ENCODE measurements at regions of chr6 and their contacts with region 1.

Region 1: GRCh38 chr6:42984001-42984923 is at the start of gene PPP2R5D:
- DNase-seq: peak; percentile 81 to 98 (median 97)
- ATAC-seq: peak; percentile 97
- H3K4me3 ChIP-seq: peak within 1 kb of the TSS; percentile 64
- H3K4me3 Mint-ChIP-seq: peak within 1 kb of the TSS; percentile 87 to 99 (median 94)
- H3K27ac ChIP-seq: peak within 1 kb of the TSS; percentile 95
- H3K27ac Mint-ChIP-seq: peak within 1 kb of the TSS; percentile 89 to 99 (median 95)
- H3K4me1 ChIP-seq: peaks cover 28 to 40% of the 10 kb centered on the region in 2 donors
- H3K4me1 Mint-ChIP-seq: peaks cover 46 to 71% (median 68%) of the 10 kb centered on the region in 7 donors
- H3K27me3 ChIP-seq: no peaks in the 10 kb centered on the region
- H3K27me3 Mint-ChIP-seq: no peaks in the 10 kb centered on the region
- total RNA-seq, gene PPP2R5D: 19.7 to 60.4 (median 28.2) TPM

Region 2: GRCh38 chr6:42890311-42891198 is 93.7 kb before region 1 on chr6:
- CTCF ChIA-PET with region 1: no interaction called
- POLR2A ChIA-PET with region 1: interaction called, 3 read pairs
- intact Hi-C with region 1: loop called (anchors 1 to 5 kb)
- DNase-seq: peak; percentile 70 to 90 (median 87)
- ATAC-seq: peak; percentile 99
- H3K4me3 ChIP-seq: peak overlapping the region; percentile 89
- H3K4me3 Mint-ChIP-seq: peak overlapping the region; percentile 94 to 100 (median 98)
- H3K27ac ChIP-seq: peak overlapping the region; percentile 87
- H3K27ac Mint-ChIP-seq: peak overlapping the region; percentile 89 to 99 (median 98)
- H3K4me1 ChIP-seq: peaks cover 0 to 8% of the 10 kb centered on the region in 2 donors
- H3K4me1 Mint-ChIP-seq: peaks cover 0 to 26% (median 14%) of the 10 kb centered on the region in 7 donors
- H3K27me3 ChIP-seq: no peaks in the 10 kb centered on the region
- H3K27me3 Mint-ChIP-seq: no peaks in the 10 kb centered on the region

Region 3: GRCh38 chr6:42963855-42964605 is 20.2 kb before region 1 on chr6:
- CTCF ChIA-PET with region 1: interaction called, 4 read pairs
- POLR2A ChIA-PET with region 1: interaction called, 13 read pairs
- intact Hi-C with region 1: loop called in 1 of 2 experiments (anchors 2 kb)
- DNase-seq: peak in 5 of 9 donors; percentile 14 to 46 (median 23)
- ATAC-seq: peak; percentile 43
- H3K4me3 ChIP-seq: no peak overlapping the region
- H3K4me3 Mint-ChIP-seq: no peak overlapping the region
- H3K27ac ChIP-seq: no peak overlapping the region
- H3K27ac Mint-ChIP-seq: no peak overlapping the region
- H3K4me1 ChIP-seq: peaks cover 0 to 5% of the 10 kb centered on the region in 2 donors
- H3K4me1 Mint-ChIP-seq: peaks cover 0 to 24% (median 16%) of the 10 kb centered on the region in 7 donors
- H3K27me3 ChIP-seq: no peaks in the 10 kb centered on the region
- H3K27me3 Mint-ChIP-seq: peaks cover 0 to 18% (median 0%) of the 10 kb centered on the region in 5 donors

Region 4: DNA sequence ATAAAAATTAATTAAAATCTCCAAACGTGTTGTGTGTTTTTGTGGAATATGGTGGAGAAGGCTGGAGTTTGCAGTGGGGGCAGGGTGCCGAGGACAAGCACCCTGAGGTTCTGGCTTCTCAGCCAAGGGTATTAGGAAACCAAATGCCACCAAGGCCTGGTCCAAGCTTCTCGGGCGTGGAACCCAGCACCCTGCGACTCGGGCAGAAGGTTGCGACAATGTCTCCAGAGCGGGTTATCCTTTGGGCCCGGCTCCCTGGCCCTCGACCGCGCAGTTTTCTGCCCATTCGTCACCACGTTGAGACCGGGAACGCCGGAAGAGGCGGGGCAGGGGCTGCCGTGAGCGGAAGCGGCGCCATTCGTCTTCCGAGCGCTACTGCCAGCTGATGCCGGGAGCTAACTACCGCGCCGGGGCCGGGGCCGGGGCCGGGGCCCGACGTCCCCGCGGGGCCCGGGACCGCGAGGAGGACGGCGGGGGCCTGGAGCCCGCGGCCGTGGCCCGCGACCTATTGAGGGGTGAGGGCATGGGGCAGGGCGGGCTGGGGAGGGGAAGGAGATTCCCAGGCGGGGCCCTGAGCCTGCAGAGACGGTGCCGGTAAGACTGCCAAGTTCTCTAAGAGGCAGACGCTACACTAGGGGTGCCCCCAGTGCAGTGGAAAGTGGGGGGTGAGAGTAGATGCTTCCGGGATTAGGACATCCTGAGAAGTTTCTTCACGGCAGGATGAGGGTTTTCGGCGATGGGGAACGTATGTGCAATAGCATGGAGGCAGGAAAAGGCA is 37.2 kb after region 1 on chr6 and contains the start of gene RRP36:
- CTCF ChIA-PET with region 1: no interaction called
- POLR2A ChIA-PET with region 1: interaction called, 70 read pairs
- intact Hi-C with region 1: no loop called
- DNase-seq: peak; percentile 33 to 76 (median 51)
- ATAC-seq: peak; percentile 88
- H3K4me3 ChIP-seq: peak within 1 kb of the TSS; percentile 89
- H3K4me3 Mint-ChIP-seq: peak within 1 kb of the TSS; percentile 95 to 99 (median 98)
- H3K27ac ChIP-seq: peak within 1 kb of the TSS; percentile 81
- H3K27ac Mint-ChIP-seq: peak within 1 kb of the TSS; percentile 74 to 97 (median 93)
- H3K4me1 ChIP-seq: peaks cover 11 to 19% of the 10 kb centered on the region in 2 donors
- H3K4me1 Mint-ChIP-seq: peaks cover 23 to 60% (median 41%) of the 10 kb centered on the region in 7 donors
- H3K27me3 ChIP-seq: no peaks in the 10 kb centered on the region
- H3K27me3 Mint-ChIP-seq: no peaks in the 10 kb centered on the region
- total RNA-seq, gene RRP36: 25.4 to 66.3 (median 48.4) TPM

Region 5: GRCh38 chr6:43053545-43054205 is 69.4 kb after region 1 on chr6 and contains the start of gene CUL7:
- CTCF ChIA-PET with region 1: no interaction called
- POLR2A ChIA-PET with region 1: interaction called, 24 read pairs
- intact Hi-C with region 1: loop called (anchors 1 kb)
- DNase-seq: peak; percentile 72 to 90 (median 88)
- ATAC-seq: peak; percentile 99
- H3K4me3 ChIP-seq: peak within 1 kb of the TSS; percentile 70
- H3K4me3 Mint-ChIP-seq: peak within 1 kb of the TSS; percentile 86 to 99 (median 94)
- H3K27ac ChIP-seq: peak within 1 kb of the TSS; percentile 89
- H3K27ac Mint-ChIP-seq: peak within 1 kb of the TSS; percentile 92 to 99 (median 97)
- H3K4me1 ChIP-seq: peaks cover 8 to 24% of the 10 kb centered on the region in 2 donors
- H3K4me1 Mint-ChIP-seq: peaks cover 37 to 58% (median 50%) of the 10 kb centered on the region in 7 donors
- H3K27me3 ChIP-seq: no peaks in the 10 kb centered on the region
- H3K27me3 Mint-ChIP-seq: no peaks in the 10 kb centered on the region
- total RNA-seq, gene CUL7: 9.8 to 14.5 (median 12.7) TPM

Region 6: GRCh38 chr6:43059168-43060033 is 75.1 kb after region 1 on chr6 and contains the starts of genes KLC4 and MRPL2:
- CTCF ChIA-PET with region 1: no interaction called
- POLR2A ChIA-PET with region 1: interaction called, 24 read pairs
- intact Hi-C with region 1: loop called in 1 of 2 experiments (anchors 1 kb)
- DNase-seq: peak; percentile 79 to 98 (median 95)
- ATAC-seq: peak; percentile 99
- H3K4me3 ChIP-seq: peak within 1 kb of the TSS; percentile 80
- H3K4me3 Mint-ChIP-seq: peak within 1 kb of the TSS; percentile 88 to 100 (median 96)
- H3K27ac ChIP-seq: peak within 1 kb of the TSS; percentile 88
- H3K27ac Mint-ChIP-seq: peak within 1 kb of the TSS; percentile 95 to 100 (median 99)
- H3K4me1 ChIP-seq: peaks cover 0 to 21% of the 10 kb centered on the region in 2 donors
- H3K4me1 Mint-ChIP-seq: peaks cover 28 to 50% (median 45%) of the 10 kb centered on the region in 7 donors
- H3K27me3 ChIP-seq: no peaks in the 10 kb centered on the region
- H3K27me3 Mint-ChIP-seq: no peaks in the 10 kb centered on the region
- total RNA-seq, gene KLC4: 16.5 to 56.9 (median 42.5) TPM
- total RNA-seq, gene MRPL2: 32.0 to 57.5 (median 47.7) TPM

Region 7: GRCh38 chr6:43113431-43114260 is 129.4 kb after region 1 on chr6:
- CTCF ChIA-PET with region 1: no interaction called
- POLR2A ChIA-PET with region 1: no interaction called
- intact Hi-C with region 1: no loop called
- DNase-seq: no peak
- ATAC-seq: no peak
- H3K4me3 ChIP-seq: no peak overlapping the region
- H3K4me3 Mint-ChIP-seq: no peak overlapping the region
- H3K27ac ChIP-seq: no peak overlapping the region
- H3K27ac Mint-ChIP-seq: no peak overlapping the region
- H3K4me1 ChIP-seq: no peaks in the 10 kb centered on the region
- H3K4me1 Mint-ChIP-seq: peaks cover 0 to 2% (median 0%) of the 10 kb centered on the region in 7 donors
- H3K27me3 ChIP-seq: no peaks in the 10 kb centered on the region
- H3K27me3 Mint-ChIP-seq: no peaks in the 10 kb centered on the region

Region 8: DNA sequence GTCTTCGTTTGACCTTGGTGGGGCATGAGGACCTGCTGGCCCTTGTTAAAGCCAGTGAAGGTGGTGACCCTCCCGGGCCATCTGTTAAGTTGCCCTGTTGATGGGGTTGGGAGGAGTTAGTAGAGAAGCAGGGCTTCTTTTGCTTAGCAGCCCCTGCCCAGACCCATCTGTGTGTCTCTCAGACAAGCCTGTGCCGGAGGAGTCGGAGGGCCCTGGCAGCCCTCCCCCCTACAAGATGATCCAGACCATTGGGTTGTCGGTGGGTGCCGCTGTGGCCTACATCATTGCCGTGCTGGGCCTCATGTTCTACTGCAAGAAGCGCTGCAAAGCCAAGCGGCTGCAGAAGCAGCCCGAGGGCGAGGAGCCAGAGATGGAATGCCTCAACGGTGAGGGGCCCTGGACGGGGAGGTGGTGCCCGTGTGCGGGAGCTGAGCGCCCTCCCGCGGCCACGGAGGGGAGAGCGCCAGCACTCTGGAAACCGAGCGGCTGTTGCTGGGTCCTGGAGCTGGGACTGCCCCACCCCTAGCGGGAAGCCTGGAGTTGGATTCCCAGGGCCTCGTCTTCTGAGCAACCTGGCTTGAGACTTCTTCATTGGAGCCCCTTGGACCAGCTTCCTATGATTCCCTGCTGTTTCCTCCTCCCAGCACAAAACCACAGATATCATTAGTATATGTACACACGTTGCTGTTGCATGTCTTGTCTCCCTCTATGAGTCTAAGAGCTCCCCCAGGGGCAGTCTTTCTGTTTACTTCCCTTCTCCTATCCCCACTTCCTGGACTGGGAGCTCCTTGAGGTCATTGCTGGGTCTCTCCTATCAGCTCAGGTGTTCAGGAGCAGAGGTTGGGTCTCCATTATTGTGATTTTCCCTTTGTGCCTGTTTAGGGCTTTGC is 159.2 kb after region 1 on chr6:
- CTCF ChIA-PET with region 1: interaction called, 3 read pairs
- POLR2A ChIA-PET with region 1: interaction called, 8 read pairs
- intact Hi-C with region 1: loop called in 1 of 2 experiments (anchors 1 kb)
- DNase-seq: peak; percentile 62 to 85 (median 76)
- ATAC-seq: peak; percentile 95
- H3K4me3 ChIP-seq: peak overlapping the region; percentile 0
- H3K4me3 Mint-ChIP-seq: peak overlapping the region in 8 of 10 donors; percentile 25 to 63 (median 38)
- H3K27ac ChIP-seq: no peak overlapping the region
- H3K27ac Mint-ChIP-seq: peak overlapping the region in 5 of 9 donors; percentile 30 to 86 (median 51)
- H3K4me1 ChIP-seq: peaks cover 11 to 21% of the 10 kb centered on the region in 2 donors
- H3K4me1 Mint-ChIP-seq: peaks cover 5 to 21% (median 16%) of the 10 kb centered on the region in 7 donors
- H3K27me3 ChIP-seq: no peaks in the 10 kb centered on the region
- H3K27me3 Mint-ChIP-seq: no peaks in the 10 kb centered on the region

Measured in naive thymus-derived CD4-positive, alpha-beta T cell (primary cell).